Activated T-helper 1 cell treated with anti-CD3 and anti-CD28 coated beads, Interleukin-12 subunit alpha, Interleukin-12 subunit beta, Interleukin-2, Interleukin-4 antibody, amounts not matched to agents 30 ng/mL and 10 ng/mL and 1 ng/mL, durations not matched to agents 14 hours and 24 hours and 36 hours (primary cell): ENCODE measurements at regions of chr18 and their contacts with region 1.

Region 1: GRCh38 chr18:48326901-48327675 is 82.1 kb downstream of the ZBTB7C start:
- DNase-seq: no peak
- H3K4me3 Mint-ChIP-seq: no peak overlapping the region
- H3K27ac Mint-ChIP-seq: no peak overlapping the region
- H3K4me1 Mint-ChIP-seq: peaks cover 6% of the 10 kb centered on the region
- H3K27me3 Mint-ChIP-seq: peaks cover 5% of the 10 kb centered on the region

Region 2: GRCh38 chr18:48030616-48031480 is 296.2 kb before region 1 on chr18:
- intact Hi-C with region 1: loop called (anchors 10 kb)
- DNase-seq: no peak
- H3K4me3 Mint-ChIP-seq: no peak overlapping the region
- H3K27ac Mint-ChIP-seq: no peak overlapping the region
- H3K4me1 Mint-ChIP-seq: no peaks in the 10 kb centered on the region
- H3K27me3 Mint-ChIP-seq: no peaks in the 10 kb centered on the region